Posterior vena cava (tissue), 2 donors: ENCODE measurements at regions of chr6 and their contacts with region 1.

Region 1: DNA sequence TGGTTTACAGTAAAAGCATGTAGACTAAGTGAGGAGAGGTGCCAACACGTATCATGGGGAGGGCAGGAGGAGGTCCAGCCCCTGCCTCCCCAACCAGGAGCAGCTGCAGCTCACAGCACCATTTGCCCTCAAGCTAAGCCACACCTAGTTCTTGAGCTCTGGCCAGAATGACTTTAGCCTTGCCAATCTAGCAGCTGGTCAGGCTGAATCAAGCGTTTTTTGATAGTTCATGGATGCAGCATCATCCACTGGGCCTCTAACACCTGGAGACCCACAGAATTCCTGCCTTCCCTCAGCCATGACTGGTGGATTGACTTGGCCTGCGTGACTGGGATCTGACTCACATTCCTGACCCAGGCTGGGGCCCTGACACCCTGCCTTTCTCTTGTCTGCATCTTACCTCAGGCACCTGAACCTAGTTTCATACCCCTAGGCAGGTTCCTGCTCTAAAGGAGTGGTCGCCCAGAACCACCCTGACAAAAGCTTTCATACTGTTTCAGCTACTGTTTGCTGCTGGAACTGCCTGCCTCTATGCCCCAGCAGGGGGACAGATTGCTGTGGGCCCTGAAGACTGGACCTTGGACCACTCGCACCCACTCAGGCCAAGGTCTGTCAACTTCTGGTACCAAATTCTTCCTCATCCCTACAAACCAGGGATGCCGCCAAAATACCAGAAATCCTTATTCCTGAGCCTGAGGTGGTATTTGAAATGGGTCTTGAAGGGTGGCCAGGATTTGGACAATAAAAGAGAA is 122.3 kb downstream of the QRSL1 start:
- DNase-seq: no peak

Region 2: GRCh38 chr6:106731144-106731842 is 20.4 kb before region 1 on chr6:
- intact Hi-C with region 1: loop called in 1 of 2 experiments (anchors 2 kb)
- DNase-seq: no peak

Region 3: DNA sequence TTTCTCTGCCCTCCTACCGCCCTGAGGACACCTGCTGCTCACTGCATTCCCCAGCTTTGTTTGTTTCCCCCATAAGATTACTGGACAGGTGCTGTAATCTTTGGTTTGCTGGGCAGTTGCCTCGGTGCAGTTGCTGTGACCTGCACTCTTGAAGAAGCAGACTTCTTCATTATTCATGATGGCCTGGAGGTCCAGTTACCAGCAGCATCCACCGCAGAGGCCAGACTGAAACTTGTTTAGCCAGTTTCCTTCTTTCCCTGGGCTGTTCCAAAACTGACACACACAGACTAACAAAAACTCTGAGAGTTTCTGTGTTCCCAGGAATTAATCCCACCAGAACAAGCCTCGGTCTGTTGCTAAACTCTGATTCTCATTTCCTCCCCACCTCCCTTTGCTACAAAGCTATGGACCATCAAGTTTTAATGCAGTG is 21.8 kb after region 1 on chr6:
- intact Hi-C with region 1: no loop called
- DNase-seq: no peak

Region 4: GRCh38 chr6:106799008-106799894 is 47.6 kb after region 1 on chr6:
- intact Hi-C with region 1: no loop called
- DNase-seq: no peak

Region 5: GRCh38 chr6:106820412-106820852 is 68.8 kb after region 1 on chr6:
- intact Hi-C with region 1: no loop called
- DNase-seq: no peak